MCF 10A (cell line): ENCODE measurements at regions of chr7 and their contacts with region 1.

Region 1: GRCh38 chr7:100586266-100587025 is at the start of gene FBXO24:
- DNase-seq: peak; percentile 100
- H3K4me3 Mint-ChIP-seq: peak within 1 kb of the TSS; percentile 92
- H3K27ac Mint-ChIP-seq: peak within 1 kb of the TSS; percentile 90
- H3K4me1 Mint-ChIP-seq: peaks cover 13% of the 10 kb centered on the region
- H3K27me3 Mint-ChIP-seq: no peaks in the 10 kb centered on the region
- CTCF ChIP-seq: no peak
- total RNA-seq, gene FBXO24: 0.37 and 1.1 TPM in 2 replicates

Region 2: GRCh38 chr7:100428199-100428966 is 158.1 kb before region 1 on chr7 and contains the start of gene ZCWPW1:
- CTCF ChIA-PET with region 1: no interaction called
- POLR2A ChIA-PET with region 1: interaction called, 31 read pairs
- intact Hi-C with region 1: no loop called
- DNase-seq: peak; percentile 96
- H3K4me3 Mint-ChIP-seq: peak within 1 kb of the TSS; percentile 82
- H3K27ac Mint-ChIP-seq: peak within 1 kb of the TSS; percentile 100
- H3K4me1 Mint-ChIP-seq: peaks cover 26% of the 10 kb centered on the region
- H3K27me3 Mint-ChIP-seq: no peaks in the 10 kb centered on the region
- CTCF ChIP-seq: no peak
- total RNA-seq, gene ZCWPW1: 6.5 and 8.5 TPM in 2 replicates

Region 3: DNA sequence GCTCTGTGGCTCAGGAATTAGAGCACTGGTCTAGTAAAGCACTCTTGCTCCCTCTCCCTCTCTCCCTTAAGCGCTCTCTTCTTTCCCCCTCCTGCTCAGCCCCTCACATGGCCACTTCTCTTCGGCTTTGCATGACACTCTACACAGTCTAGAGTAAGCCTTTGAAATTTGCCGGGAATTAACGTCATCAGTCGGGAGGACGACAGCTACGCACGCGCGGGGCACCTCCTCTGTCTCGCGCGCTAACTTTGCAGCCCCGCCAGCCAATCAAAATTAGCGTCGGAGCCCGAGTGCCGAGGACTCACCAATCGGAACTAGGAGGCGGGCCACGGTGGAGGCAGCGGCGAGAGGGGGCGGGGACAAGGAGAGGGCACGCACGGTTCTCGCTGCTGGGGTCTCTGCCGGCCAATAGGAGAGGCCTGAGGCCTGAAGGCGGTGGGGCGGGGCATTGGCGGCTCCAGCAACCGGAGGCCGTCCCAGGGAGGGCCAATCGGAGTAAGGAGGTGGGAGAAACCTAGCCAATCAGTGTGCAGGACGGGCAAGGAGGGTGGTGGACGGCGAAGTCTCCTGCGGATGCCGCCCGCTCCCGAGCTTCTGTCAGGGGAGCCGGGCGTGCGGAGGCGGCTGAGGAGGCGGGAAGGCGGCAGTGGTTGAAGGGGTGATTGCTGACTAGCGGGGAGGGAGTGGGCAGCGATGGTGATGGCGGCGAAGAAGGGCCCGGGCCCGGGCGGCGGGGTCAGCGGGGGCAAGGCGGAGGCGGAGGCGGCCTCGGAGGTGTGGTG is 47.6 kb before region 1 on chr7 and contains the start of gene AGFG2:
- CTCF ChIA-PET with region 1: no interaction called
- POLR2A ChIA-PET with region 1: interaction called, 20 read pairs
- intact Hi-C with region 1: no loop called
- DNase-seq: peak; percentile 100
- H3K4me3 Mint-ChIP-seq: peak within 1 kb of the TSS; percentile 81
- H3K27ac Mint-ChIP-seq: peak within 1 kb of the TSS; percentile 36
- H3K4me1 Mint-ChIP-seq: peaks cover 28% of the 10 kb centered on the region
- H3K27me3 Mint-ChIP-seq: no peaks in the 10 kb centered on the region
- CTCF ChIP-seq: no peak
- total RNA-seq, gene AGFG2: 8.4 and 11.9 TPM in 2 replicates

Region 4: DNA sequence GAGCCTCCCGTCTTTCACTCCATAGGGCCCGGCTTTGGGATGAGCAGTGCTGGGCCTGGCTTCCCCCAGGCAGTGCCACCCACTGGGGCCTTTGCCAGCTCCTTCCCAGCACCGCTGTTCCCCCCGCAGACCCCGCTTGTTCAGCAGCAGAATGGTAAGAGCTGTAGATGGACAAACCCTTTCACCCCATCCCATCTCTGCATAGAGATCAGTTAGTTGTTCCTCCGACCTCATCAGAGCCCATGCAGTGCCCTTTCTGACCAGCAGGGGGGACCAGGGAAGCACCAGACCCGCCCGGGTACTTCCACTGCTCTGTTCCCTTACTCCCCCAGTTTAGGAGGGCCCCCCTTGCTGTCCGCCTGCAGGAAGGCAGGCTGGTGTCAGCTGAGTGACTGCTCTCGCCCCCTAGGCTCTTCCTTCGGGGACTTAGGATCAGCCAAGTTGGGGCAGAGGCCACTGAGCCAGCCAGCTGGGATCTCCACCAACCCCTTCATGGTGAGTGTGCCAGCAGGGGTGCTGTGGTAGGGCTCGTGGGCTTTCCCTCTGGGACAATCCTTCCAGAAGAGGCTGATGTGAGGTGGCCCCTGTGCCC is 22.5 kb before region 1 on chr7:
- CTCF ChIA-PET with region 1: interaction called, 11 read pairs
- POLR2A ChIA-PET with region 1: interaction called, 6 read pairs
- intact Hi-C with region 1: loop called (anchors 1 kb)
- DNase-seq: peak; percentile 60
- H3K4me3 Mint-ChIP-seq: no peak overlapping the region
- H3K27ac Mint-ChIP-seq: no peak overlapping the region
- H3K4me1 Mint-ChIP-seq: no peaks in the 10 kb centered on the region
- H3K27me3 Mint-ChIP-seq: no peaks in the 10 kb centered on the region
- CTCF ChIP-seq: peak; percentile 78

Region 5: DNA sequence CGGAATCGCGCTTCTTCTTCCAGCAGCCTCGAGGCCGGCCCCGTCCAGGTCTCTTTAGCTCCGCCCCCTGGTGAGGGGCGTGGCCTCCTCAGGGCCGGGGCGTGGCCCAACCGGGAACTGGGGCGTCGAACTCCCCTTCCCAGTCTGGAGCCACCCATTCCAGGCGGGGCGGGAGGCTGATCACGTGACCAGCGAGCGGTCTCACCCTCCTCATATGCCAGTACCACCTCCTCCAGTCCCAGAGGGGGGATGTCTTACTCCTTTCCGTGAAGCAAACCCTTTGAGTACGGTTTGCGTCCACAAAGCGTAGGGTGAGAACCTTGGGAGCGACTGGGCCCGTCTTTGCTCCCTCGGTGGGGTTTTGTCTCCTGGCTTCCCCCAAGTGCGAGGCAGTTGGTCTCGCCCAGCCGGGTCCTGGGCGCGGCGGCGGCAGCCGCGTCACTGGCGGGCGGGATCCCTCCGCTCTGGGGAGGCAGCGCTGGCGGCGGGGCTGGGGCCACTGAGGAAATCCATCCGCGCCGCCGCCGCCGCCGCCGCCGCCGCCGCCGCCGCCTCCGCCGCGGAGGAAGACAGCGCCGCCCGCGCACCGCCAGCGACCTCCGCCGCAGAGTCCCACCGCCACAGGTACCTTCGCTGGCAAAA is 87.0 kb after region 1 on chr7 and contains the start of gene GNB2:
- CTCF ChIA-PET with region 1: no interaction called
- POLR2A ChIA-PET with region 1: interaction called, 23 read pairs
- intact Hi-C with region 1: no loop called
- DNase-seq: peak; percentile 99
- H3K4me3 Mint-ChIP-seq: peak within 1 kb of the TSS; percentile 76
- H3K27ac Mint-ChIP-seq: peak within 1 kb of the TSS; percentile 94
- H3K4me1 Mint-ChIP-seq: peaks cover 11% of the 10 kb centered on the region
- H3K27me3 Mint-ChIP-seq: no peaks in the 10 kb centered on the region
- CTCF ChIP-seq: no peak
- total RNA-seq, gene GNB2: 196 and 201 TPM in 2 replicates

Region 6: DNA sequence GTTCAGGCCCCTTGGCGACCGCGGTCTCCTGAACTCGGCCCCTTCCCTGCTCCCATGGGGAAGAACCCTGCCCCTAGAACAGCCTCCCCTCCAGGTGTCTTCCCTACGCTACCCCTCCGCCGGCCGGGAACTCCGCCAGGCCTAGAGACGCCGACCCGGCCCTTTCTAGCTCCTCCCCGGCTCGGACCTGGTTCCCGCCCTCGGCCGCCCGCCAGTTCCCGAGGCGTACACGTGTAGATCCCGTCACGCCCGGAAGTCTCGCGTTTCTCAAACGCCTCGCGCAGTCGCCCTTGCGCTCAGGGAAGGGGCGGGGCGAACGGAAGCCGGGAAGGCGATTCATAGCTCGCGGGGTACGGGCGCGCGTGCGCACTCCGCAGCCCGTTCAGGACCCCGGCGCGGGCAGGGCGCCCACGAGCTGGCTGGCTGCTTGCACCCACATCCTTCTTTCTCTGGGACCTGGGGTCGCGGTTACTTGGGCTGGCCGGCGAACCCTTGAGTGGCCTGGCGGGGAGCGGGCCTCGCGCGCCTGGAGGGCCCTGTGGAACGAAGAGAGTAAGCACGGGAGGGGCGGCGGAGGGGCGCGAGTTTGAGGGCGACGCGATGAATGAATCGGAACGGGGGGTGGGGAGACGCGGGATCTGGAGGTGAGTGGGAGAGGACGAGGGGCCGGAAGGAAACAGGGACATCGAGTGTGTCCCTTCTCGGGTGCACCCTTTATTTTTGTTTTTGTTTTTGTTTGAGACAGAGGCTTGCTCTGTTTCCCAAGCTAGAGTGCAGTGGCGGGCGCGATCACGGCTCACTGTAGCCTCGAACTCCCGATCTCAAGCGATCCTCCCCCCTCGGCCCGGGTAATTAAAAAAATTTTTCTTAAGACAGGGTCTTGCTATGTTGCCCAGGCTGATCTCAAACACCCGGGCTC is 119.6 kb after region 1 on chr7 and contains the start of gene POP7:
- CTCF ChIA-PET with region 1: interaction called, 10 read pairs
- POLR2A ChIA-PET with region 1: interaction called, 19 read pairs
- intact Hi-C with region 1: no loop called
- DNase-seq: peak; percentile 98
- H3K4me3 Mint-ChIP-seq: peak within 1 kb of the TSS; percentile 95
- H3K27ac Mint-ChIP-seq: peak within 1 kb of the TSS; percentile 93
- H3K4me1 Mint-ChIP-seq: peaks cover 10% of the 10 kb centered on the region
- H3K27me3 Mint-ChIP-seq: peaks cover 10% of the 10 kb centered on the region
- CTCF ChIP-seq: no peak
- total RNA-seq, gene POP7: 49.0 and 59.2 TPM in 2 replicates

Region 7: DNA sequence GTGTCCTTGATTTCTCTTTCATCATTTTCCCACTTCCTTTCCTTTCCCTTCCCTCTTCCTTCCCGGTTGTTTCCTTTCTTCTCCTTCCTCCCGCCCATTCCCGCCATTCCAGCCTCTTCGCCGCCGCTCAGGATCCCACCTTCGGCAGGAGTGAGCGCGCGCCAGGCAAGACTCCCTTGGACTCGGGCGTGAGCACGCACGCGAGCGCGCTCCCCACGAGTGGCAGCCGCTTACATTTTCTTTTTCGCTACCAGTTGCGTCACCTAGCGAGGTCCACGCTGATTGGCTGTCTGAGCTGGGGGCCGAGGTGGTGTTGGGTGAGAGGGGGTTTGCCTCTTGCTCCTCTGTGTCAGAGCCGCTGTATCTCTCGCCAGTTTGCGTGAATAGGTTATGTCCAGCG is 158.7 kb after region 1 on chr7:
- CTCF ChIA-PET with region 1: no interaction called
- POLR2A ChIA-PET with region 1: no interaction called
- intact Hi-C with region 1: no loop called
- DNase-seq: no peak
- H3K4me3 Mint-ChIP-seq: peak overlapping the region; percentile 58
- H3K27ac Mint-ChIP-seq: no peak overlapping the region
- H3K4me1 Mint-ChIP-seq: no peaks in the 10 kb centered on the region
- H3K27me3 Mint-ChIP-seq: peaks cover 13% of the 10 kb centered on the region
- CTCF ChIP-seq: no peak

Region 8: GRCh38 chr7:100889761-100890634 is 303.6 kb after region 1 on chr7:
- CTCF ChIA-PET with region 1: no interaction called
- POLR2A ChIA-PET with region 1: interaction called, 10 read pairs
- intact Hi-C with region 1: no loop called
- DNase-seq: peak; percentile 92
- H3K4me3 Mint-ChIP-seq: peak overlapping the region; percentile 90
- H3K27ac Mint-ChIP-seq: peak overlapping the region; percentile 83
- H3K4me1 Mint-ChIP-seq: peaks cover 22% of the 10 kb centered on the region
- H3K27me3 Mint-ChIP-seq: no peaks in the 10 kb centered on the region
- CTCF ChIP-seq: no peak